ENCODE measurements at regions of chr19 and their contacts with region 1.

Region 1: GRCh38 chr19:588093-588740 is 1.5 kb upstream of the HCN2 start:
- DNase-seq: peak; percentile 32 to 86 (median 60)
- ATAC-seq: peak; percentile 69
- H3K4me3 ChIP-seq: no peak overlapping the region
- H3K4me3 Mint-ChIP-seq: peak overlapping the region; percentile 63
- H3K27ac ChIP-seq: no peak overlapping the region
- H3K27ac Mint-ChIP-seq: no peak overlapping the region
- H3K4me1 ChIP-seq: peaks cover 38% of the 10 kb centered on the region
- H3K4me1 Mint-ChIP-seq: peaks cover 5% of the 10 kb centered on the region
- H3K27me3 ChIP-seq: peaks cover 25 to 30% of the 10 kb centered on the region in 2 experiments
- H3K27me3 Mint-ChIP-seq: peaks cover 23% of the 10 kb centered on the region
- CTCF ChIP-seq: no peak

Region 2: DNA sequence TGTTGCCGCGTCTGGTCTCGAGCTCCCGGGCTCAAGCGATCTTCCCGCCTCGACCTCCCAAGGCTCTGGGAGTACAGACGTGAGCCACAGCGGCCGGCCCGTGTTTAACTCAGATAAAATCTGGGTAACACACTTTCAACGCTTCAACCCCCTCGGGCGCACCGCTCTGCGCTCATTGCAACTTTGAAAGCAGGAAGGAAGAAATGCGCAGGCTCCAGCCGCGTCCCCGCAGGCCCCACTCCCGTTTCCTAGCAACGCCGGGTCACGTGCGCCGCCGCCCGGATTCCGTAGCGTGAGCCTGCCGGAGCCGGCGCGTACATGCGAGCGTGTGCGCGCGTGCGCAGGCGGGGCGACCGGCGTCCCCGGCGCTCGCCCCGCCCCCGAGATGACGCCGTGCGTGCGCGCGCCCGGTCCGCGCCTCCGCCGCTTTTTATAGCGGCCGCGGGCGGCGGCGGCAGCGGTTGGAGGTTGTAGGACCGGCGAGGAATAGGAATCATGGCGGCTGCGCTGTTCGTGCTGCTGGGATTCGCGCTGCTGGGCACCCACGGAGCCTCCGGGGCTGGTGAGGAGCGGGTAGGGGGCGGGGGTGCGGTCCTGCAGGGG is 16.0 kb before region 1 on chr19 and contains the start of gene BSG:
- CTCF ChIA-PET with region 1: interaction called, 14 read pairs
- POLR2A ChIA-PET with region 1: interaction called, 6 read pairs
- intact Hi-C with region 1: no loop called
- DNase-seq: peak; percentile 97 to 100 (median 98)
- ATAC-seq: peak; percentile 83
- H3K4me3 ChIP-seq: peak within 1 kb of the TSS; percentile 94
- H3K4me3 Mint-ChIP-seq: peak within 1 kb of the TSS; percentile 99
- H3K27ac ChIP-seq: peak within 1 kb of the TSS; percentile 69 to 87
- H3K27ac Mint-ChIP-seq: peak within 1 kb of the TSS; percentile 95
- H3K4me1 ChIP-seq: peaks cover 60% of the 10 kb centered on the region
- H3K4me1 Mint-ChIP-seq: peaks cover 40% of the 10 kb centered on the region
- H3K27me3 ChIP-seq: no peaks in the 10 kb centered on the region
- H3K27me3 Mint-ChIP-seq: no peaks in the 10 kb centered on the region
- CTCF ChIP-seq: no peak
- total RNA-seq, gene BSG: 68.7 to 71.6 TPM

Region 3: GRCh38 chr19:610801-611505 is 22.7 kb after region 1 on chr19:
- CTCF ChIA-PET with region 1: interaction called, 6 read pairs
- POLR2A ChIA-PET with region 1: no interaction called
- intact Hi-C with region 1: loop called in 1 of 2 experiments (anchors 1 kb)
- DNase-seq: peak; percentile 33 to 90 (median 56)
- ATAC-seq: peak; percentile 71
- H3K4me3 ChIP-seq: peak overlapping the region; percentile 65
- H3K4me3 Mint-ChIP-seq: peak overlapping the region; percentile 95
- H3K27ac ChIP-seq: peak overlapping the region; percentile 29 to 67
- H3K27ac Mint-ChIP-seq: peak overlapping the region; percentile 85
- H3K4me1 ChIP-seq: peaks cover 43% of the 10 kb centered on the region
- H3K4me1 Mint-ChIP-seq: peaks cover 25% of the 10 kb centered on the region
- H3K27me3 ChIP-seq: no peaks in the 10 kb centered on the region
- H3K27me3 Mint-ChIP-seq: peaks cover 3% of the 10 kb centered on the region
- CTCF ChIP-seq: no peak

Region 4: DNA sequence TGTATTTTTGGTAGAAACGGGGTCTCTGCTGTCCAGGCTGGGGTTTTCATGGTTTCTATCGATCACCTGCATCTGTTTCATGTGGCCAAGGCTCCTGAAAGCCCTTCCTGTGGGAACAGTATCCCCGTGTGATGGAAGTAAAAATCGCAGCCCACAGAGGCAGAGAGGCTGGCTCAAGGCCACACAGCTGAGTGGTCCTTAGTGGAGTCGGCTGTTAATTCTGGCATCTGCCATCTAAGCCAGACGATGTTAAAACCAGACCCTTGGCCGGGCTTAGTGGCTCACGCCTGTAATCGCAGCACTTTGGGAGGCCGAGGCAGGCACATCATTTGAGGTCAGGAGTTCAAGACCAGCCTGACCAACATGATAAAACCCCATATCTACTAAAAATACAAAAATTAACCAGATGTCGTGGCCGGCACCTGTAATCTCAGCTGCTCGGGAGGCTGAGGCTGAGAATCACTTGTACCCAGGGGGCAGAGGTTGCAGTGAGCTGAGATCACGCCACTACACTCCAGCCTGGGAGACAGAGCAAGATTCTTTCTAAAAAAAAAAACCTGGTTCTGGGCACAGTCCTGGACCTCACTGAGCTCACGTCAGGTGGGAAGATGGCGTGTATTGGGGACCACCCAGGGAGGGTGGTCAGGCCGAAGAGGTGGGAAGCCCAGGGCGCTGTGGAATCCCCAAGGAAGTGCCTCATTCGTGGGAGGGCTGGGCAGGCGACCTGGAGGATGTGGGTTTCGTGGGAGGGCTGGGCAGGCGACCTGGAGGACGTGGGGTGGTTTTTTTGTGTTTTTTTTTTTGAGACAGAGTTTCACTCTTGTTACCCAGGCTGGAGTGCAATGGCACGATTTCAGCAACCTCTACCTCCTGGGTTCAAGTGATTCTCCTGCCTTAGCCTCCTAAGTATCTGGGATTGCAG is 144.2 kb after region 1 on chr19:
- CTCF ChIA-PET with region 1: interaction called, 25 read pairs
- POLR2A ChIA-PET with region 1: no interaction called
- intact Hi-C with region 1: loop called (anchors 1 kb)
- DNase-seq: peak in 1 of 14 experiments; percentile 38
- ATAC-seq: no peak
- H3K4me3 ChIP-seq: no peak overlapping the region
- H3K4me3 Mint-ChIP-seq: no peak overlapping the region
- H3K27ac ChIP-seq: no peak overlapping the region
- H3K27ac Mint-ChIP-seq: no peak overlapping the region
- H3K4me1 ChIP-seq: peaks cover 20% of the 10 kb centered on the region
- H3K4me1 Mint-ChIP-seq: peaks cover 6% of the 10 kb centered on the region
- H3K27me3 ChIP-seq: no peaks in the 10 kb centered on the region
- H3K27me3 Mint-ChIP-seq: no peaks in the 10 kb centered on the region
- CTCF ChIP-seq: no peak